HepG2 (cell line): ENCODE measurements at regions of chr17 and their contacts with region 1.

Region 1: DNA sequence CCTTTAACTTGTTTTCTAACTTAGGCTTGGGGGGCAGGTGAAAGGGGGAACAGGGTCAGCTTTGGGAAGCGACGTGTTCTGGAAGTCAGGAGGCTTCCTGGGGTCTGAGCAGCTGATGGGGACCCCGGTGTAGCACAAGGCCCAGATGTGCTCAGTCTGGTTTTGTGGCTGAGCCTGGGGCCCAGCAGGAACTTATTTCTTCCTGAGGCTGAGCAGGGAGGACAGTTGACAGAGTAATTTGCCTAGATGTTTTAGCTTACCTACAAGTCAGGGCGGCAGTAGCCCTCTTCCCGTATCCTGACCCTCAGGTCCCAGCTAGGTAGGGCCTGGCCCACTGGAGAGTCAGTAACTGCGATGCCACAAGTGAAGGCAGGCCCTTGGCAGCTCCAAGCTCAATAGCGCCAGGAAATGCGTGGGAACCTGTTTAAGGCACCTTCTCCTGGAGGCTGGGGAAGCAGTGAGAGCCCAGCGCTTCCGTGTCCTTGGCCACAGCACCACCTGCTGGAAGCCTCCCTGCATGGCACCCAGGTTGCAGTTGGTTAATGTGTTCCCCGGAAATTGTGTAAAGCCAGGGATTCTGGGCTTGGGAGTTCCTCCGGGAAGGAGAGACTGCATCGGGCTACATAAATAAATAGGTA is 5.2 kb downstream of the CCR7 start:
- DNase-seq: peak; percentile 90
- ATAC-seq: peak; percentile 87
- H3K4me3 ChIP-seq: peak overlapping the region; percentile 22 to 67 (median 41); a peak in 5 of 6 replicates
- H3K27ac ChIP-seq: no peak overlapping the region
- H3K4me1 ChIP-seq: peaks cover 59% of the 10 kb centered on the region
- H3K27me3 ChIP-seq: peaks cover 3 to 41% of the 10 kb centered on the region in 2 experiments; a peak in 2 of 5 replicates
- CTCF ChIP-seq: peak; percentile 100
- EP300 ChIP-seq: peak in 1 of 2 experiments; percentile 45; a peak in 2 of 4 replicates
- POLR2A ChIP-seq: no peak
- RAD21 ChIP-seq: peak; percentile 100

Region 2: DNA sequence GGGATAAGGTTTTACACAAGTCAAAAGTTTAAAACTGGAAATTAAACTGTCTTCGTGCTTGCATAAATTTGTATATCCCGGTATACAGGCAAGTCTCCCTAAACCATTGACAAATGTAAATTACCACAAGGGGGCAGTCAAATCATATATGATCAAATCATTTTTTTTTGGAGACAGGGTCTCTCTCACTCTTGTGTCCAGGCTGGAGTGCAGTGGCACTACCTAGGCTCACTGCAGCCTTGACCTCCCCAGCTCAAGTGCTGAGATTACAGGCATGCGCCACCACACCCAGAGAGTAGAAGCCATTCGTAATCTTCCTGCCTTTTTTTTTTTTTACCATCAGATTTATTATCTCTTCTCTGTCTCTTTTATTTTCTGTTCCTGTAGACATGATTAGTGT is 160.9 kb before region 1 on chr17:
- CTCF ChIA-PET with region 1: interaction called, 13 read pairs
- POLR2A ChIA-PET with region 1: no interaction called
- in situ Hi-C with region 1: no loop called
- intact Hi-C with region 1: loop called (anchors 1 kb)
- DNase-seq: peak; percentile 74
- ATAC-seq: peak; percentile 71
- H3K4me3 ChIP-seq: no peak overlapping the region
- H3K27ac ChIP-seq: no peak overlapping the region
- H3K4me1 ChIP-seq: no peaks in the 10 kb centered on the region
- H3K27me3 ChIP-seq: no peaks in the 10 kb centered on the region
- CTCF ChIP-seq: peak; percentile 51
- EP300 ChIP-seq: no peak
- POLR2A ChIP-seq: no peak
- RAD21 ChIP-seq: peak; percentile 55; the same call in 1 of the 2 replicates

Region 3: GRCh38 chr17:40443583-40444327 is 116.3 kb before region 1 on chr17:
- CTCF ChIA-PET with region 1: interaction called, 14 read pairs
- POLR2A ChIA-PET with region 1: interaction called, 4 read pairs
- in situ Hi-C with region 1: loop called (anchors 5 kb)
- intact Hi-C with region 1: loop called (anchors 1 kb)
- DNase-seq: peak; percentile 69
- ATAC-seq: peak; percentile 68
- H3K4me3 ChIP-seq: peak overlapping the region; percentile 38 to 81 (median 67)
- H3K27ac ChIP-seq: no peak overlapping the region
- H3K4me1 ChIP-seq: peaks cover 58% of the 10 kb centered on the region
- H3K27me3 ChIP-seq: peaks cover 1 to 6% of the 10 kb centered on the region in 2 experiments; a peak in 3 of 5 replicates
- CTCF ChIP-seq: peak; percentile 92
- EP300 ChIP-seq: no peak
- POLR2A ChIP-seq: no peak
- RAD21 ChIP-seq: peak; percentile 87

Region 4: DNA sequence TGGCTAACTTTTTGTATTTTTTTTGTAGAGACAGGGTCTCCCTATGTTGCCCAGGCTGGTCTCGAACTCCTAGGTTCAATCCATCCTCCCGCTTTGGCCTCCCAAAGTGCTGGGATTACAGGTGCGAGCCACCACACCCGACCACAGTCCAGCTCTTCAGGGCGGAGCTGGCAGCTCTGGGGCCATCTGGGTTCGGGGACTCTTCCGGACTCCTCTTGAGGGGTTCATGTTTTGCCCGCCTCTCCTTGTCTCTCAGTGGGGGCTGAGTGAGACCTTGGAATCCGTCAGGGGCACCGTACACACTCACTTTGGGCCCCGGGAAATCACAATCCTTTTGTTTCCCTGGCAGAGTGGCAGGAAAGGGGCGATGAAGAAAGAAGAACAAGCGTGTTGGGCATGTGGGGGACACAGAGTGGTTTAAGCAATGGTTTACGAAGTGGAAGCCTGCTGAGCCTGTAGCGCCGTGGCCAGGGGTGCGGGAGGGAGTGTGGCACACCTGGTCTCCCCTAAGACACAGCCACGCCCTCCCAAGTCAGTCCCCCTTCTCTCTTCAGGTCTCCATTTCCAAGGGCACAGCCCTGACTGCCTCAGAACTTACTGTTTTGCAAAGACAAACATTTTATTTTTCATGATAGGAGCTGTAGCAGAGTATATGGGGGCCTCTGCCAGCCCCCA is 84.7 kb before region 1 on chr17:
- CTCF ChIA-PET with region 1: interaction called, 13 read pairs
- POLR2A ChIA-PET with region 1: interaction called, 6 read pairs
- in situ Hi-C with region 1: no loop called
- intact Hi-C with region 1: no loop called
- DNase-seq: no peak
- ATAC-seq: no peak
- H3K4me3 ChIP-seq: no peak overlapping the region
- H3K27ac ChIP-seq: no peak overlapping the region
- H3K4me1 ChIP-seq: peaks cover 60% of the 10 kb centered on the region
- H3K27me3 ChIP-seq: no peaks in the 10 kb centered on the region
- CTCF ChIP-seq: no peak
- EP300 ChIP-seq: no peak
- POLR2A ChIP-seq: no peak
- RAD21 ChIP-seq: no peak